Esophagus squamous epithelium (tissue), 5 donors: ENCODE measurements at regions of chr1 and their contacts with region 1.

Region 1: GRCh38 chr1:59880735-59881134 is 45.8 kb downstream of the CYP2J2 start:
- DNase-seq: no peak
- H3K4me3 ChIP-seq: no peak overlapping the region
- H3K27ac ChIP-seq: no peak overlapping the region
- H3K4me1 ChIP-seq: peaks cover 0 to 10% (median 0%) of the 10 kb centered on the region in 3 donors
- H3K27me3 ChIP-seq: no peaks in the 10 kb centered on the region
- CTCF ChIP-seq: no peak
- POLR2A ChIP-seq: no peak

Region 2: GRCh38 chr1:59609245-59609644 is 271.5 kb before region 1 on chr1:
- intact Hi-C with region 1: no loop called
- DNase-seq: no peak
- H3K4me3 ChIP-seq: no peak overlapping the region
- H3K27ac ChIP-seq: no peak overlapping the region
- H3K4me1 ChIP-seq: no peaks in the 10 kb centered on the region
- H3K27me3 ChIP-seq: no peaks in the 10 kb centered on the region
- CTCF ChIP-seq: no peak
- POLR2A ChIP-seq: no peak

Region 3: GRCh38 chr1:59947047-59947938 is 66.6 kb after region 1 on chr1:
- intact Hi-C with region 1: loop called (anchors 10 kb)
- DNase-seq: peak; percentile 1
- H3K4me3 ChIP-seq: no peak overlapping the region
- H3K27ac ChIP-seq: no peak overlapping the region
- H3K4me1 ChIP-seq: peaks cover 0 to 4% (median 0%) of the 10 kb centered on the region in 3 donors
- H3K27me3 ChIP-seq: no peaks in the 10 kb centered on the region
- CTCF ChIP-seq: peak; percentile 61 to 90 (median 87)
- POLR2A ChIP-seq: no peak

Region 4: GRCh38 chr1:60448850-60449249 is 568.1 kb after region 1 on chr1:
- intact Hi-C with region 1: no loop called
- DNase-seq: no peak
- H3K4me3 ChIP-seq: no peak overlapping the region
- H3K27ac ChIP-seq: no peak overlapping the region
- H3K4me1 ChIP-seq: no peaks in the 10 kb centered on the region
- H3K27me3 ChIP-seq: no peaks in the 10 kb centered on the region
- CTCF ChIP-seq: no peak
- POLR2A ChIP-seq: no peak